ENCODE measurements at regions of chr17 and their contacts with region 1.

Region 1: DNA sequence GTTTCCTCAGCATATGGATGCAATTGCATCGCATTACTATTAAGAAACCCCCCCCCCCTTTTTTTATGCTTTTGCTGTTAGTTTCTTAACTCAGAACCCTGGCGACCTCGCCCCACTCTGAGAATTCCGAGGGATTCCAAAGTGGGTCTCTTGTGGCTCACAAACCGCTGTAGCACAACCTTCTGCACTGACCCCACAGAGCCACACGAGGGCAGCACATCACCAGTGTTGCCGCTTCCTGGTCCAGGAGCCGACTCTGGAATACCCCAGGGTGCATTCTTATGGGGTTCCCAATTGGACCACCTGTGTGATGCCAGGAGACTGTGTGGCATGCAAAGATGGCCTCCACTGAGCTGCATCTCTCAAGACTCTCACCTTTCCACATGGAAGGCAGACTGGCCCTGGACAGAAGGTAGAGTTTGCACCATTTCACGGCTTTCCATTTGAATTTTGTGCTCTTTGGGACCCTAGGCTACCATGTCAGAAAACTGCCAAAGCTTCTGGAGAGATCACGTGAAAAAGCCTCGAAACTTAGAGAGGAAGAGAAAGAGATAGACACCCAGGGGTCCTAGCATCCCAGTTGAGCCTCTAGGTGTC is 432.7 kb upstream of the ASIC2 start:
- DNase-seq: peak; percentile 31
- H3K4me3 Mint-ChIP-seq: no peak overlapping the region
- H3K27ac Mint-ChIP-seq: no peak overlapping the region
- H3K4me1 Mint-ChIP-seq: no peaks in the 10 kb centered on the region
- H3K27me3 Mint-ChIP-seq: peaks cover 13% of the 10 kb centered on the region

Region 2: DNA sequence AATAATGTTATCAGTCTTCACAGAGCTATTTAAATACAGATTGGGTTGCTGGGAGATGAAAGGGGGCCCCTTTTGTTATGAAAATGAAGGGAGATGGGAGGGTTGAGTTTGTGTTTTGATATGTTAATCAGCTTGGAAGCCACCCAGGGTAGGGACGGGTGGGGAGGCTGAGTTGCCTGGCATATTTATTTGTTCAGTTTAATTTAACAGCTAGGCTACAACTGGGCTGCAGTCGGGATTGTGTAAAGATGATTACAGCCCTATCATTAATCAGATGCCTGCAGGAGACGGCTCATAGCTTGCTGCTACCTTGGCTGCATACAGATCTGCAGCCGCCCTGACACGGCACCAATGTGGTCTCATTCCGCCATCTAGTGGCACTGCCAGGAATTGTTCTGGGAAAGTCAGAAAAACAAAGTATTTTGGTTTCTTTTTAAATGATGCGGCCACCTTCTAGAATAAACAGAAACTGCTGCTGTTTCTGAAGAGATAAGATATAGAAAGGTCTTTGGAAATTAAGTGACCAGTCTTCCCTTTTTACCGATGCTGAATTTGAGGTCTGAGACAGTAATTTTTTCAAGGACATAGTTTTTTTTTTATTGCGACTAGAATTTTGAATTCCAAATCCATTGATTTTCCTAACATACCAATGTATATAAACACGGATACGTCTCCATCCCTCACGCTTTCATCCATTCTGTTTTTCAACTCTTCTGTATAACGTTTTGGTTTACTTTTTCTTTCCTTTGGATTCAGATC is 25.3 kb after region 1 on chr17:
- CTCF ChIA-PET with region 1: interaction called, 17 read pairs
- POLR2A ChIA-PET with region 1: no interaction called
- intact Hi-C with region 1: loop called (anchors 1 kb)
- DNase-seq: peak; percentile 76
- H3K4me3 Mint-ChIP-seq: peak overlapping the region; percentile 7
- H3K27ac Mint-ChIP-seq: no peak overlapping the region
- H3K4me1 Mint-ChIP-seq: peaks cover 3% of the 10 kb centered on the region
- H3K27me3 Mint-ChIP-seq: peaks cover 33% of the 10 kb centered on the region

Region 3: GRCh38 chr17:33854596-33854995 is 128.8 kb after region 1 on chr17:
- CTCF ChIA-PET with region 1: no interaction called
- POLR2A ChIA-PET with region 1: no interaction called
- intact Hi-C with region 1: no loop called
- DNase-seq: no peak
- H3K4me3 Mint-ChIP-seq: no peak overlapping the region
- H3K27ac Mint-ChIP-seq: no peak overlapping the region
- H3K4me1 Mint-ChIP-seq: no peaks in the 10 kb centered on the region
- H3K27me3 Mint-ChIP-seq: peaks cover 9% of the 10 kb centered on the region

Region 4: GRCh38 chr17:33981711-33982601 is 256.2 kb after region 1 on chr17:
- CTCF ChIA-PET with region 1: no interaction called
- POLR2A ChIA-PET with region 1: no interaction called
- intact Hi-C with region 1: no loop called
- DNase-seq: no peak
- H3K4me3 Mint-ChIP-seq: no peak overlapping the region
- H3K27ac Mint-ChIP-seq: no peak overlapping the region
- H3K4me1 Mint-ChIP-seq: no peaks in the 10 kb centered on the region
- H3K27me3 Mint-ChIP-seq: no peaks in the 10 kb centered on the region

Measured in activated CD4-positive, alpha-beta memory T cell treated with anti-CD3 and anti-CD28 coated beads for 36 hours (primary cell).